Common myeloid progenitor, CD34-positive (primary cell): ENCODE measurements at regions of chr6 and their contacts with region 1.

Region 1: DNA sequence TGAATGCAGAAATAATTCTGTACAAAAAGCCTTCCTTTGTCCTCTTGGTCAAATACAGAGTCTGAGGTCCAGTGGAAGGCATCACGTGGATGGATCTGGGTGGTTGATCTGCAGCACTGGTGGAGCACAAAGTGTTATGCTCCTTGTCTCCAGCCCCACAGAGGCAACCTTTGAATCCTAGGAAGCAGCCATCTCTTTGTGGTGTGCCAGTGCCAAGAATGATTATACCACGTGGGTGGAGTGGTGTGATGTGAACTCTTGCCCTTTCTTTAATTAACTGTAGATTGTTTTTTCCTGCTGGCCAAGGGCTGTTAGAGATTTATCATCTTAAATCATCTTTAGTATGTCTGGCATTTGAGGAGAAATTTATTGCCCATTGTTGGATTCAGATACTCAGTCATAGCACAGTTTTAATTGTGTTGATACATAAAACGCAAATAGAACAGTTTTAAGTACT is 31.1 kb downstream of the NCOA7 start:
- DNase-seq: peak in 1 of 3 donors; percentile 63
- H3K4me3 ChIP-seq: peak overlapping the region in 1 of 7 experiments; percentile 7
- H3K27ac ChIP-seq: no peak overlapping the region
- H3K4me1 ChIP-seq: peaks cover 12 to 65% (median 28%) of the 10 kb centered on the region in 4 experiments
- H3K27me3 ChIP-seq: no peaks in the 10 kb centered on the region

Region 2: DNA sequence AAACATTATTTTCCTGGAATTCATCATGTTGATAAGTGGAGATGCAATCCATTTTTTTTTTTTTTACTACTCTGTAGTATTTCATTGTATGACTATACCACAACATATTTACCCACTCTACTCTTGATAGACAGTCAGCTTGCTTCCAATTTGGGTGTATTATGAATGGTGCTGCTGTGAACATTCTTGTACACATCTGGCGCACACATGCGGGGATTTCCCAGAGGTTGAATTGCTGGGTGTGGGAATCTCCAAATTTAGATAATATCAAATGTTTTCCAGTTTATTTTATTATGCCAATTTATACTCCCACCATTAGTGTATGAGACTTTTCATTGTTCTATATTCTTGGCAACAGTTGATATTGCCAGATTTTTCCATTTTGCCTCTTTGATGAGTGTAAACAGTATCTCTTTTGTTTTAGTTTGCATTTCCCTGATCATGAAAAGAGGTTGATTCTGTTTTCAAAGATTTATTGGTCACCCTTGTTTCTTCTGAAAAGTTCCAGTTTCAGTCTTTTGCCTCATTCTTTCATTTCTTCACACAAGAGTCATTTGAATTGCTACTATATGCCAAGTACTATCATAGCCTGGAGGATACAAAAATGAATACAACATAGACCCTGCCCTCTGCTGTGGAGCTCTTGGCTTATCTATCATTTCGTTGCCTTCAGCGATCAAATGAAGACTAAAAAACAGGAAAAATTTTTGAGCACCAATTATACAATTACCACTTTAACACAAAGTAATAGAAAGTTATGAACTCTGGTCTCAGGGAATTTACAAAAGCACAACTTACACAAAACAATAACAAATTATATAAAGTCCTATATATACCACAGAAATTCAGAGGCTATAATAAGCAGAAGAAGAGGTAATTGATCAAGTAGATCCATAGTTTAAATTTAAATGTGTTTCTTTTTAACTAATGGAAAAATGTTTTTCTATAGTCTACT is 48.2 kb before region 1 on chr6:
- CTCF ChIA-PET with region 1: no interaction called
- POLR2A ChIA-PET with region 1: no interaction called
- DNase-seq: no peak
- H3K4me3 ChIP-seq: no peak overlapping the region
- H3K27ac ChIP-seq: no peak overlapping the region
- H3K4me1 ChIP-seq: no peaks in the 10 kb centered on the region
- H3K27me3 ChIP-seq: peaks cover 0 to 4% (median 0%) of the 10 kb centered on the region in 5 experiments

Region 3: DNA sequence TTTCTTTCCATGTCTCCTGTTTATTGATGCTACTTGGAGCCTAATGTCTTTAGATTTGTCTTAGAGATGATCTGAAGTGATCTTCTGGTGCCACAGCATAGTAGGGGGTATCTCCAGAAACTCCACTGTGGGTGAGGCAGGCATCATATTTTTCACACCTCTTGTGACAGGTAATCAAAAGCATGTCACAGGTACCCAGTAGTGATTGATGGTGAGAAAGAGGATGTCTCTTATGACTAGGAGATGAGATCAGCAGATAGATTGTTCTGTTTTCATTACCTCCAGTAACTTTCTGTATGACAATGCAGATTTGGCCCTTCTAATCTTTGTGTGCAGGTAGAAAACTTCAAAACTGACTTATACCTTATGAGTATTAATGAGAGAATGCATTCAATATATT is 17.6 kb before region 1 on chr6:
- CTCF ChIA-PET with region 1: interaction called, 24 read pairs
- POLR2A ChIA-PET with region 1: no interaction called
- DNase-seq: peak in 1 of 3 donors; percentile 54
- H3K4me3 ChIP-seq: peak overlapping the region in 1 of 7 experiments; percentile 12
- H3K27ac ChIP-seq: no peak overlapping the region
- H3K4me1 ChIP-seq: peaks cover 30 to 69% (median 46%) of the 10 kb centered on the region in 4 experiments
- H3K27me3 ChIP-seq: no peaks in the 10 kb centered on the region

Region 4: DNA sequence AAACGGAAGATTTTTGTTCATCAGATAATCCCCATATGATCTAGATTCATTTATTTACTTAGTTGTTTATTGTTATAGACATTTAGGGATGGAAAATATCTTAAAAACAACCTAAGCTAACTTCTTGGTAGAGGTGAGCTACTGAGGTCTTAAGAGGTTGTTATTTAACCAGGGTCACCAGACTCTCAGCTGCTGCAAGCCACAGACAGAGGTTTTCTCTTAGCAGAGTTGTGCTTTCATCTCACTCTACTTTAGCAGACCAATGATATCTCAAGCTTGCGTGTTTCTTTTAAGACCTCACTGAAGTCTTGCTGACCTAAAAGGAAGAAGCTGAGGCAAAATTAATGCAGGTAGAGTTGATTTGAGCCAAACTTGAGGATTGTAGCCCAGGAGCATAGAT is 12.5 kb after region 1 on chr6:
- CTCF ChIA-PET with region 1: interaction called, 17 read pairs
- POLR2A ChIA-PET with region 1: interaction called, 3 read pairs
- DNase-seq: peak in 1 of 3 donors; percentile 55
- H3K4me3 ChIP-seq: peak overlapping the region in 3 of 7 experiments; percentile 0 to 22 (median 13)
- H3K27ac ChIP-seq: peak overlapping the region; percentile 25 to 44
- H3K4me1 ChIP-seq: peaks cover 39 to 72% (median 60%) of the 10 kb centered on the region in 4 experiments
- H3K27me3 ChIP-seq: no peaks in the 10 kb centered on the region